ENCODE measurements at regions of chr2 and their contacts with region 1.

Region 1: DNA sequence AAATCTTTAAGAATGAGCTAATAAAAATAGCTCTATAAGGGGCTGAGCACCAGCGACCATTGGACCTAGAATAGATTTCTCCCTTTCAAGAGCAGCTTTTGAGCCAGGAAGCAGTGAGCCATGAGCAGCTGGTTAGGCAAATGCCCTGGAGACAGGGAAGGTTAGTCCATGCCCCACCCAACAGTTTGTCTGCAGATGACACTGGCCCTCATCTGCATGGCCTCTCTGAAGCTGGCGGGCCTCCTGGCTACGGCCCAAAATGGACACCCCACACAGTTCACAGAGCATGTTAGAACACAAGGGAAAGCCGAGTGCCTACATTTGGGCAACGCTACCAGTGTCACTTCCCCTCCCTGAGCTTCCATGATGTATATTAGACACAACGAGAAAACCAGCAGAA is 201.1 kb downstream of the MGAT5 start:
- DNase-seq: no peak
- H3K4me3 ChIP-seq: no peak overlapping the region
- H3K27ac ChIP-seq: no peak overlapping the region
- H3K4me1 ChIP-seq: peaks cover 5% of the 10 kb centered on the region
- H3K27me3 ChIP-seq: no peaks in the 10 kb centered on the region
- CTCF ChIP-seq: no peak
- POLR2A ChIP-seq: no peak

Region 2: DNA sequence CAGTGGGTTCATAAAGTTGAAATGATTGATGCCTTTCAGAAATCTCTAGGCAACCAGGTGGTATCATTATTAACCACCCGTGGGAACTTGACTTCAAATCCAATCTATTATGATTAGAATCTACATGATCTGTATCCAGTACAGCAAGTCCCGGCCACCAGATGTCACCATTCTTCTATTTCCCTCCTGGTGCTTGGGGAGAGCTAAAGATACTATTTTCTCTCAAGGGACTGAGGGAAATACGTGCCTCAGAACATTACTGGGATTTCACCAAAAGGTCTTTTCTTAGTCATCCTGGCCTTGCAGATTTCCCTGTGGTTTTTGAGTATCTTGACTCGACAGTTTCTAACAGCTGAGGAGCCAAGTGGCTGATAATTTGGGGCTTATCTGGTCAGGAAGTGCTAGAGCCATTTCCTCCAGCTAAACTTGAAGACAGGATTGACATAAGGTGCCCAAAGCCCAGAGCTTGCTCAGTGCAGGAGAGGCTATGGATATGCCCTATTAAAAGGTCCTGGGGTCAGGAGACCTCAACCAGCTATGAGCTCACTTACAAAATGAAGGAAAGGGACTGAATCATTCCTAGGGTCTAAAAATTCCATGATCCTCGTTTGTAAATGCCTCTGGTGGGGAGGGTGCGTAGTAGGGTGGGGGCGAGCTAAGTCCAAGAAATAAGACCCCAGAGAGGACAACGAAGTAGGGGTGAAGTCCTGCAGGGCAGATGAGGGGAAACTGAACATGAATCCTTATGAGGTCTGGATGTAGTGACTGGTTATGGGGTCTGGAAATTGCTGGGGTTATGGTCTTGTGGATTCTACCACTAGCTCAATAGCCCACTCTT is 336.4 kb before region 1 on chr2:
- CTCF ChIA-PET with region 1: interaction called, 157 read pairs
- POLR2A ChIA-PET with region 1: no interaction called
- dilution Hi-C with region 1: no loop called
- intact Hi-C with region 1: loop called (anchors 1 kb)
- DNase-seq: peak; percentile 92
- H3K4me3 ChIP-seq: no peak overlapping the region
- H3K27ac ChIP-seq: peak overlapping the region; percentile 43
- H3K4me1 ChIP-seq: peaks cover 25% of the 10 kb centered on the region
- H3K27me3 ChIP-seq: peaks cover 0 to 3% of the 10 kb centered on the region in 2 experiments
- CTCF ChIP-seq: peak; percentile 64 to 69
- POLR2A ChIP-seq: no peak

Region 3: GRCh38 chr2:134245340-134245984 is 209.5 kb before region 1 on chr2:
- CTCF ChIA-PET with region 1: interaction called, 31 read pairs
- POLR2A ChIA-PET with region 1: no interaction called
- dilution Hi-C with region 1: no loop called
- intact Hi-C with region 1: loop called (anchors 2 kb)
- DNase-seq: peak; percentile 57
- H3K4me3 ChIP-seq: no peak overlapping the region
- H3K27ac ChIP-seq: no peak overlapping the region
- H3K4me1 ChIP-seq: peaks cover 14% of the 10 kb centered on the region
- H3K27me3 ChIP-seq: no peaks in the 10 kb centered on the region
- CTCF ChIP-seq: peak; percentile 76
- POLR2A ChIP-seq: no peak

Region 4: GRCh38 chr2:134348239-134348638 is 106.7 kb before region 1 on chr2:
- CTCF ChIA-PET with region 1: interaction called, 13 read pairs
- POLR2A ChIA-PET with region 1: no interaction called
- dilution Hi-C with region 1: no loop called
- intact Hi-C with region 1: no loop called
- DNase-seq: peak; percentile 8
- H3K4me3 ChIP-seq: no peak overlapping the region
- H3K27ac ChIP-seq: no peak overlapping the region
- H3K4me1 ChIP-seq: peaks cover 8% of the 10 kb centered on the region
- H3K27me3 ChIP-seq: no peaks in the 10 kb centered on the region
- CTCF ChIP-seq: no peak
- POLR2A ChIP-seq: no peak

Region 5: DNA sequence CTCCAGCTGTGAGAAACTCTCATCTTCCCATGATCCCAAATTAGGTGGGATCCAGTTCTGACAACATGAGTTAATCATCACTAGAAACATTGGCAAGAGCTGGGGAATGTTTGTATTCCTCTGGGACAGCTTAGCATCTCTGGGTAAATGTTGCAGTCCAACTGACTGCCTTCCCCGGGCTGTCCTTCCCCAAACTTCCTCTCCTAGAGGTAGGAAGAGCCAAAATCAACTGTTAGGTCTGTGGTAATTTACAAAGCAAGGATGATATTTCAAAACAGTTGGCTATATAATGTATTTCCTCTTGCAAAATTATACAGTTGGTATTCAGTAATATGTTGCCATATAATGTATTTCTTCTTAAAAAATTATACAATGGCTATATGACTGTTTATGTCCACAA is 52.5 kb before region 1 on chr2:
- CTCF ChIA-PET with region 1: interaction called, 48 read pairs
- POLR2A ChIA-PET with region 1: no interaction called
- dilution Hi-C with region 1: no loop called
- intact Hi-C with region 1: no loop called
- DNase-seq: peak; percentile 21
- H3K4me3 ChIP-seq: no peak overlapping the region
- H3K27ac ChIP-seq: no peak overlapping the region
- H3K4me1 ChIP-seq: peaks cover 60% of the 10 kb centered on the region
- H3K27me3 ChIP-seq: no peaks in the 10 kb centered on the region
- CTCF ChIP-seq: no peak
- POLR2A ChIP-seq: no peak

Region 6: DNA sequence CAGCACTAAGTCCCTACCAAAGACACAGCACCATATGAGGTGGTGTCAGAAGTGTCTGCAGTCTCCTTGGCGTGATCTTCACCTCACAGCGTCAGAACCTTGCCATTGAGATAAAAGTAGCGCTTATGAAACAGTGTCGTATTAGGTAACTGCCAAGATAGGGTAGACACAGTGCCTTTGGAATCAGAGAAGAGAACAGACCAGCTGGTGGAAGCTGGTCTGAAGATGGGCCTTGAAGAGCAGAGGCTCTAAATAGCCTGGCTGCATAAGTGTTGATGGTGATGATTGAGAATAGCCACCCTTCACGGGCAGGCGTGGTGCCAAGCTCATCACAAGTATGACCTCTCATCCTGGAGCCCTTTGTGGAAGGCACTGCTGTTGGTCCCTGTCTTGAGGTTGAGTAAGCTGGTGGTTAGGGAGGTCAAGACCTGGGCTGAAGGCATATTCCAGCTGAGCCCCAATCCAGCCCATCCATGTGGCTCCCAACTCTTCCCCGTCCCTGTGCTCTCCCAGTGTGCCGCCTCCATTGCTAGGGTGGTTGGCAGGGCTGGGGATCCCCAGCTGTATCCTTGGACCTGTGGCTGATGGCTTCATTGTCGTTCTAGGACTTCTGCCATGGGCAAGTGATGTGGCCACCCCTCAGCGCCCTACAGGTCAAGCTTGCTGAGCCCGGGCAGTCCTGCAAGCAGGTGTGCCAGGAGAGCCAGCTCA is 13.6 kb before region 1 on chr2:
- CTCF ChIA-PET with region 1: interaction called, 28 read pairs
- POLR2A ChIA-PET with region 1: no interaction called
- dilution Hi-C with region 1: no loop called
- intact Hi-C with region 1: no loop called
- DNase-seq: no peak
- H3K4me3 ChIP-seq: no peak overlapping the region
- H3K27ac ChIP-seq: no peak overlapping the region
- H3K4me1 ChIP-seq: peaks cover 45% of the 10 kb centered on the region
- H3K27me3 ChIP-seq: no peaks in the 10 kb centered on the region
- CTCF ChIP-seq: no peak
- POLR2A ChIP-seq: no peak

Region 7: DNA sequence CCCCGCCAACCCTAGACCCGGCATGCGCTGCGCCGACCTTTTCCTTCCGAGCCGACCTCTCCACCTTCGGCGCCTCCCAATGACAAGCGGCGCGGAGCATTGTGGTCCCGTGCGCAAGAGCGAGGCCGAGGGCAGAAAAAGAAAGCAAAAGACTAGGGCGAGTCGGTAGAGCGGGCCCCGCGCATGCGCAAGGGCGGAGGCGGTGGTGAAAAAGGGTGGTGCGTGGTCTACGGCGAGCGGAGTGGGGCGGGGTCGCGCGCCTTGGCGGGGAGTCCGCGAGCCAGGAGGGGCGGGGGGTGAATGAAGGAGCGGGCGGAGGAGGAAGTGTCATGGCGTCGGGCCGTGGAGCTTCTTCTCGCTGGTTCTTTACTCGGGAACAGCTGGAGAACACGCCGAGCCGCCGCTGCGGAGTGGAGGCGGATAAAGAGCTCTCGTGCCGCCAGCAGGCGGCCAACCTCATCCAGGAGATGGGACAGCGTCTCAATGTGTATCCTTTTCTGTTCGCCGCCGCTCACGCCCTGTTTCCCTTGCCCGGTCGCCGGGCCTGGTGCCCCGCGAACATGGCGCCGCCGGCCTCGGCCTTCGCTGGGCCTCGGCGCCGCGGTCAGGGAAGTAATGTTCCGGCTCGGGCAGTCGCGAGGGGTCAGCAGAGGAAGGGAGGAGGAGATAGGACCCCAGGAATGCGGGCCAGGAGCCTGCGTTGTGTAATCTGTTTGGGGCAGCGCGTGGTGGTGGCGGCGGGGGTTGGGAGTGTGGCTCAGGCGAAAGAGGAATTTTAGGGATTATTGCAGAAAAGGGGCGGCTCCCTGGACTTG is 463.8 kb after region 1 on chr2 and contains the start of gene CCNT2:
- CTCF ChIA-PET with region 1: interaction called, 17 read pairs
- POLR2A ChIA-PET with region 1: no interaction called
- dilution Hi-C with region 1: no loop called
- intact Hi-C with region 1: no loop called
- DNase-seq: peak; percentile 99
- H3K4me3 ChIP-seq: peak within 1 kb of the TSS; percentile 93 to 100 (median 100)
- H3K27ac ChIP-seq: peak within 1 kb of the TSS; percentile 91
- H3K4me1 ChIP-seq: peaks cover 17% of the 10 kb centered on the region
- H3K27me3 ChIP-seq: no peaks in the 10 kb centered on the region
- CTCF ChIP-seq: no peak
- POLR2A ChIP-seq: peak; percentile 63
- total RNA-seq, gene CCNT2: 35.4 and 35.5 TPM in 2 replicates